Ascending aorta (tissue), 2 donors: ENCODE measurements at regions of chr3 and their contacts with region 1.

Region 1: DNA sequence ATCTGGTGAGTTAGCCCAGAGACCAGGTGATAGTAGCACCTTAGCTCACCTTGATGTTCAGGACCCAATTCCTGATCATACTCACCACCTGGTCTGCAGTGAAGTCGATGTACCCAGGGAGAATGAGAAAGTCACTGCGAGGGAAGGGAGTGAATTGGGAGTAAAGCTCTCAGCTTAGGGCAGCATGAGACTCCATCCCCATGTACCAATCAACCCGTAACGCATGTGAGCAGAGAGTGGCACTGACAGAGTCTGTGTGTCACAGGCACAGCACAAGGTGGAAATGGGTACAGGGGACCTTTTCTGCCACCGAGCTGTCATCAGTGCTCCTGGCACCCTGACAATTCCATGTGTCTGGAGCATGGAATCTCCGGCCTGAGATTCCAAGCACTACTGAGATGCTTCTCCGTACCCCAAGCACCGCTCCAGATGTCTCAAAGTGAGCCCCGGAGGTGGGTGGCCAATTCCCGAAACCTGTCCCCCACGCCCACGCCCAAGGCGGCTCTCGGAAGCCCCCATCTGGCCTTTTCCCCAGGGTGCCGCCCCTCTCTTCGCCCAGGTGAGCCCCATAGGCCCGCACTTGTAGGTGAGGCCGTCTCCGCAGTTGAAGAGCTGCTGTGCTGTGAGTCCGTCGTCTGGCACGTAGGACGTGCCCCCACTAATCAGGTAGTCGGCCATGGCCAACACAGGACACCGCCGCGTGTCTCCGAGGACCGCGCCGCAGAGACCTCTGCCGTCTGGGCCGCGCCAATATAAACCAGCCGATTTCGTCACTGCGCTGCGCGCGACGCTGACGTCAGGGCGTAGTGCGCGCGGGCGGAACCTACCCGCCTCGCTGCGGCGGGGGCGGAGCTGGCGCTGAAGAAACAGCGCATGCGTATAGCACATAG is at the start of gene IMPDH2:
- DNase-seq: peak; percentile 68 to 96
- H3K4me3 ChIP-seq: peak within 1 kb of the TSS; percentile 59 to 76
- H3K27ac ChIP-seq: peak within 1 kb of the TSS; percentile 92 to 96
- H3K4me1 ChIP-seq: peaks cover 0 to 8% of the 10 kb centered on the region in 2 donors
- H3K27me3 ChIP-seq: no peaks in the 10 kb centered on the region
- CTCF ChIP-seq: no peak
- total RNA-seq, gene IMPDH2: 101 TPM

Region 2: GRCh38 chr3:48989796-48990635 is 38.9 kb before region 1 on chr3 and contains the start of gene P4HTM:
- intact Hi-C with region 1: no loop called
- DNase-seq: peak; percentile 46 to 96
- H3K4me3 ChIP-seq: peak within 1 kb of the TSS; percentile 80 to 99
- H3K27ac ChIP-seq: peak within 1 kb of the TSS; percentile 92 to 97
- H3K4me1 ChIP-seq: peaks cover 10 to 26% of the 10 kb centered on the region in 2 donors
- H3K27me3 ChIP-seq: no peaks in the 10 kb centered on the region
- CTCF ChIP-seq: peak in 2 of 3 experiments; percentile 35 to 45
- total RNA-seq, gene P4HTM: 71.9 TPM

Region 3: DNA sequence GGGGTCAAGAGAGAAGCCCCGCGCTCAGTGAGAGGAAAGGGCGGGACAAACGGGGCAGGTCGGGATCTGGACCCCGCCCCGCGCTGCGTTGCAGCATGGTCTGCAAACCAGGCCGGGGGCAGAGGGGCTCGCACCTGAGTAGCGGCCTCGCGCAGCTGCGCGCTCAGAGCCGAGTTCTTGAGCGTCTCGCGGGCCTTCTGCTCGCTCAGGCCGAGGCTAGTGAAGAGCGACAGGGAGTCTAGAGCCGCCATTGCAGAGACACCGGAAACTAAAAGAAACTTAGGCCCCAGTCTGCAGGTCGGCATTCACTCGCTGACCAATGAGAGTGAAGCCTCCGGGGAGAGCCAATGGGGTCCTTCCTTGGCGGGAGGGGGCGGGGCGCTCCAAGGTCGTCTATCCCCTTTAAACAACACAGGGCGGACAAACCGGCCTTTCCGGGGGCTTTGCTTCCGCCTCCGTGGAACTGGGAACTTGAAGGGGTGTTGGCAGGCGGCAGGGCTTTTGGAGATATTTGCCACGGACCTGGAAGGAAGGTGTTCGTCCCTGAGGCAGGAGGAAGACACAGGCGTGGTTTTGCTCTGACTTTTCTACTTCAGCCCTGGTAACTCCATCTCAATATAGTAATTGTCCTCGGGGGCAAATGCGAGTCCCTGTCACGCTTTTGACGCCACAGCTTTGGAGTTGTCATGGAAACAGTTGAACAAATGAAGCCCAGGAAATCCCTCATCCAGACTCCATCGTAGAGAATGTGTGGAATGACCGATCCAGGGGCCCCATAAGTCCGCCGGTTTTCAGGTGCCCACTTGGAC is 75.8 kb after region 1 on chr3 and contains the start of gene QARS1:
- intact Hi-C with region 1: loop called (anchors 5 kb)
- DNase-seq: peak; percentile 85 to 96
- H3K4me3 ChIP-seq: peak within 1 kb of the TSS; percentile 91 to 99
- H3K27ac ChIP-seq: peak within 1 kb of the TSS; percentile 76 to 84
- H3K4me1 ChIP-seq: peaks cover 16 to 20% of the 10 kb centered on the region in 2 donors
- H3K27me3 ChIP-seq: no peaks in the 10 kb centered on the region
- CTCF ChIP-seq: no peak
- total RNA-seq, gene QARS1: 588 TPM